Activated T-helper 1 cell treated with anti-CD3 and anti-CD28 coated beads, Interleukin-12 subunit alpha, Interleukin-12 subunit beta, Interleukin-2, Interleukin-4 antibody, amounts not matched to agents 30 ng/mL and 10 ng/mL and 1 ng/mL, durations not matched to agents 14 hours and 24 hours and 36 hours (primary cell): ENCODE measurements at regions of chr6 and their contacts with region 1.

Region 1: DNA sequence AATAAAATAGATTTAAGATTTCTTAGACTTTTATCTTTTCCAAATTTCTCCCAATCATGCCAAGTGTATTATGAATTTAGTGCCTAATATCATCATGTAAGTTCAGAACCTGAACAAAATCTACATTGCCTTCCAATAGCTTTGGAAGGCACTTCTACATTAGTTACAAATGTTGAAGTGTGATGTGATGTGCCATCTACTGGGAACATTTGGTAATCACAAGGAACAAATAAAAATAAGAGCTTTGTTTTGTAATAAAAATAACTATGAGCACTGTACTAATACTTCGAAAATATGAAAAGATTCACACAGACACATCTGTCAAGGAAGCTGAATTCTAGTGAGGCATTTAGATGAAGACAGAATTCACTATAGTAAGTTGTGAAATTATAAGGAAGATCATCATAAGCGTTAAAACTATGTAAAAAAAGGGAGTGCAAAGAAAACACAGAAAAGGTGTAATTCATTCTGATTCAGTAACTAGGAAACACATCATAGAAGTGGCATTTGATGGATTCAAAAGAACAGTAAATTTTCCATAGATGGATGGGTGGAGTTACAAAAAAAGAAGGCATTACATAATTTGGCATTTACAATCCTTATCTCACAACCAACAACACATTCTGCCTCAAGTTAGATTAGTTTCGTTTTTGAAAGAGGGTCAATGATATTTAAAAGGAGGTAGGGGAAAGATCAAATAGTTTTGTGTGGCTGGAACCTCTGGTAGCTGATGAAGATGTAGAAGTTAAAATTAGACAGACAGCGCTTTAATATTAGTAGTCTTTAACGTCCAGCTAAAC is 161.0 kb downstream of the ASCC3 start:
- DNase-seq: no peak
- H3K4me3 Mint-ChIP-seq: no peak overlapping the region
- H3K27ac Mint-ChIP-seq: no peak overlapping the region
- H3K4me1 Mint-ChIP-seq: peaks cover 9% of the 10 kb centered on the region
- H3K27me3 Mint-ChIP-seq: no peaks in the 10 kb centered on the region

Region 2: GRCh38 chr6:100228831-100229641 is 491.0 kb before region 1 on chr6:
- intact Hi-C with region 1: no loop called
- DNase-seq: peak; percentile 38
- H3K4me3 Mint-ChIP-seq: peak overlapping the region; percentile 66
- H3K27ac Mint-ChIP-seq: peak overlapping the region; percentile 71
- H3K4me1 Mint-ChIP-seq: peaks cover 23% of the 10 kb centered on the region
- H3K27me3 Mint-ChIP-seq: peaks cover 6% of the 10 kb centered on the region

Region 3: DNA sequence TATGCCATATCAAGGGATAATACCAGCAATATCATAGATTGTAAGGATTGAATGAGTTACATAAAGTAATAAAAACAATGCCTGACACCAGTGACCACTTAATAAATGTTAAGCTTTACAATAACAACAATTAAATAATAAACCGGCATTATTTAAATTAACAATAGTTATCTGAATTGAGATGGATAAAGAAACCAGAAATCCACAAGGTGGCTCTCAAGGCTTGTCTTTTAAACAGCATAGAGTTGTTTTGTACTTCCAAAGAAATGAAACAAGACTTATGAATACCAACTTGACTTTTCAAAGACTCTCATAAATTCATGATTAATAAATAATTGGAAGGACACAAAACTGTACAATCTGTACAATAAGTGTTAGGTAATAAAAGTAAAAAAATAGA is 42.1 kb before region 1 on chr6:
- intact Hi-C with region 1: loop called (anchors 1 kb)
- DNase-seq: no peak
- H3K4me3 Mint-ChIP-seq: no peak overlapping the region
- H3K27ac Mint-ChIP-seq: no peak overlapping the region
- H3K4me1 Mint-ChIP-seq: no peaks in the 10 kb centered on the region
- H3K27me3 Mint-ChIP-seq: no peaks in the 10 kb centered on the region

Region 4: GRCh38 chr6:101195588-101195987 is 475.5 kb after region 1 on chr6:
- intact Hi-C with region 1: no loop called
- DNase-seq: no peak
- H3K4me3 Mint-ChIP-seq: no peak overlapping the region
- H3K27ac Mint-ChIP-seq: no peak overlapping the region
- H3K4me1 Mint-ChIP-seq: no peaks in the 10 kb centered on the region
- H3K27me3 Mint-ChIP-seq: no peaks in the 10 kb centered on the region